Activated CD4-positive, alpha-beta T cell treated with anti-CD3 and anti-CD28 coated beads for 36 hours (primary cell): ENCODE measurements at regions of chr4 and their contacts with region 1.

Region 1: GRCh38 chr4:184745831-184746795 is 12.2 kb upstream of the CENPU start:
- DNase-seq: peak; percentile 87
- ATAC-seq: peak; percentile 89
- H3K4me3 Mint-ChIP-seq: no peak overlapping the region
- H3K27ac Mint-ChIP-seq: peak overlapping the region; percentile 32
- H3K4me1 Mint-ChIP-seq: peaks cover 12% of the 10 kb centered on the region
- H3K27me3 Mint-ChIP-seq: no peaks in the 10 kb centered on the region

Region 2: DNA sequence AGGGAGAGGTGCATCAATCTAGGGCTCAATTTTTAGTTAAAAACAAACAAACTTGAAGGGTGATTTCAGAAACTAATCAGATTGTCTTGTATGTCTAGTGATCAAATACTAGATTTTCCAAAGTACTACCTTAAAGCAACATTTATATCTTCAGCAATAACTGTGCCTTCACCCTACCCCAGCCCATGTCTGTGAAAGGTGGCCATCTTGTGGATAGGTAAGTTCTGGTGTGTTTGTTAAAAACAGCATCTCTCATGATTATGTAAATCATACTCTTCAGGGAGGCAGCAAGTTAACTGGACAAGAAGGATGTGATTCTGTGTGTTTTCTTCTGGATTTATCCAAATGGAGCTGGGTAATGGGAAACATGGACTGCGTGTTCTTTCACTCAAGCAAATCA is 161.1 kb after region 1 on chr4:
- CTCF ChIA-PET with region 1: interaction called, 5 read pairs
- POLR2A ChIA-PET with region 1: no interaction called
- intact Hi-C with region 1: loop called (anchors 1 to 5 kb)
- DNase-seq: peak; percentile 10
- ATAC-seq: peak; percentile 44
- H3K4me3 Mint-ChIP-seq: no peak overlapping the region
- H3K27ac Mint-ChIP-seq: no peak overlapping the region
- H3K4me1 Mint-ChIP-seq: peaks cover 7% of the 10 kb centered on the region
- H3K27me3 Mint-ChIP-seq: no peaks in the 10 kb centered on the region

Region 3: DNA sequence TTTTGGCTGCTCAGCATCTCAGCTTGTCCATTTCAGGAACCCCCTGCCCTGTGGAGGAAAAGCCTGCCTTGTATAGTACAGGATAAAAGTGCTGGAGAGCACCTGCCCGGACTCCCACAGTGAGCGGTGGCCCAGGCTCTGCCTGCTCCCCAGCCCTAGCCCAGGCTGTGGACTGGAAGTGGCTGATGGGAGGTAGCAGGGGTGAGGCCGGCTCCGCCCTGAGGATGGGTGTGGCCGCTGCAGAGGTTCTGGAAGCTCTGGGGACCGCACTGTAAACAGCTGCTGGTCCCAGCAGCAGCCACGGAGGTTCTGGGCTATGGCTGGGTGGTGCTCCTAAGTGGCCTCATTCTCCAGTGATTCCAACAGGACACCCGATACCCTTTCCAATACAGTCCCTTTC is 215.5 kb after region 1 on chr4:
- CTCF ChIA-PET with region 1: no interaction called
- POLR2A ChIA-PET with region 1: no interaction called
- intact Hi-C with region 1: loop called (anchors 2 kb)
- DNase-seq: no peak
- ATAC-seq: no peak
- H3K4me3 Mint-ChIP-seq: no peak overlapping the region
- H3K27ac Mint-ChIP-seq: no peak overlapping the region
- H3K4me1 Mint-ChIP-seq: peaks cover 4% of the 10 kb centered on the region
- H3K27me3 Mint-ChIP-seq: peaks cover 3% of the 10 kb centered on the region

Region 4: GRCh38 chr4:184983672-184984356 is 237.7 kb after region 1 on chr4:
- CTCF ChIA-PET with region 1: interaction called, 4 read pairs
- POLR2A ChIA-PET with region 1: no interaction called
- intact Hi-C with region 1: loop called in 1 of 2 experiments (anchors 1 kb)
- DNase-seq: peak; percentile 77
- ATAC-seq: peak; percentile 94
- H3K4me3 Mint-ChIP-seq: no peak overlapping the region
- H3K27ac Mint-ChIP-seq: no peak overlapping the region
- H3K4me1 Mint-ChIP-seq: no peaks in the 10 kb centered on the region
- H3K27me3 Mint-ChIP-seq: no peaks in the 10 kb centered on the region

Region 5: GRCh38 chr4:185096032-185096653 is 350.0 kb after region 1 on chr4:
- CTCF ChIA-PET with region 1: interaction called, 3 read pairs
- POLR2A ChIA-PET with region 1: no interaction called
- intact Hi-C with region 1: loop called in 1 of 2 experiments (anchors 1 kb)
- DNase-seq: peak; percentile 41
- ATAC-seq: no peak
- H3K4me3 Mint-ChIP-seq: no peak overlapping the region
- H3K27ac Mint-ChIP-seq: no peak overlapping the region
- H3K4me1 Mint-ChIP-seq: no peaks in the 10 kb centered on the region
- H3K27me3 Mint-ChIP-seq: peaks cover 14% of the 10 kb centered on the region

Region 6: DNA sequence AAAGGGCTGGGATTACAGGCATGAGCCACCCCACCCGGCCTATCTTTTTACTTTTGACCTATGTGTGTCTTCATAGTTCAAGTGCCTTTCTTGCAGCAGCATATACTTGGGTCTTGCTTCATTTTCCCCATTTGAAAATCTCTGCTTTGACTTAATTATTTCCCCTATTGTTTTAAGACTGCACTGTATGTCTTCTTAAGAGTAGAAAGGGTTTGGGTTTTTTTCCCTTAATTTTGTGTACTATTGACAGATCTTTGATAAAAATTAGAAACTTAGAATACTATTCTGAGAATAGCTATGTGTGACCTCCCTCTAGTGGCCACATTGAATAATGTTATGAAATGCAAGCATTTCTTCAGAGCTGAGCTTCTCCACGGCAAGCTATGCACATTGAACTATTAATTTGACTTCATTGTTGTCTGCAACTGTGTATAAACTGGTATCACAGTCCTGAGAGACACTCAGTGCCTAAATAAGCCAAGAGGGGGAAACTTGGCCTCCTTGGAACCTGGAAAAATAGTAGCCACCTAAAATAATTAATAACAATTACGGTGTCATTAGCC is 388.3 kb after region 1 on chr4:
- CTCF ChIA-PET with region 1: no interaction called
- POLR2A ChIA-PET with region 1: no interaction called
- intact Hi-C with region 1: loop called in 1 of 2 experiments (anchors 1 kb)
- DNase-seq: no peak
- ATAC-seq: peak; percentile 70
- H3K4me3 Mint-ChIP-seq: no peak overlapping the region
- H3K27ac Mint-ChIP-seq: no peak overlapping the region
- H3K4me1 Mint-ChIP-seq: no peaks in the 10 kb centered on the region
- H3K27me3 Mint-ChIP-seq: peaks cover 28% of the 10 kb centered on the region